ENCODE measurements at regions of chr1 and their contacts with region 1.

Region 1: GRCh38 chr1:4132352-4133308 is 232.6 kb upstream of the C1orf174 start:
- DNase-seq: no peak
- ATAC-seq: no peak
- H3K4me3 ChIP-seq: no peak overlapping the region
- H3K27ac ChIP-seq: no peak overlapping the region
- H3K4me1 ChIP-seq: no peaks in the 10 kb centered on the region
- H3K27me3 ChIP-seq: peaks cover 0 to 4% (median 4%) of the 10 kb centered on the region in 3 donors
- CTCF ChIP-seq: no peak

Region 2: DNA sequence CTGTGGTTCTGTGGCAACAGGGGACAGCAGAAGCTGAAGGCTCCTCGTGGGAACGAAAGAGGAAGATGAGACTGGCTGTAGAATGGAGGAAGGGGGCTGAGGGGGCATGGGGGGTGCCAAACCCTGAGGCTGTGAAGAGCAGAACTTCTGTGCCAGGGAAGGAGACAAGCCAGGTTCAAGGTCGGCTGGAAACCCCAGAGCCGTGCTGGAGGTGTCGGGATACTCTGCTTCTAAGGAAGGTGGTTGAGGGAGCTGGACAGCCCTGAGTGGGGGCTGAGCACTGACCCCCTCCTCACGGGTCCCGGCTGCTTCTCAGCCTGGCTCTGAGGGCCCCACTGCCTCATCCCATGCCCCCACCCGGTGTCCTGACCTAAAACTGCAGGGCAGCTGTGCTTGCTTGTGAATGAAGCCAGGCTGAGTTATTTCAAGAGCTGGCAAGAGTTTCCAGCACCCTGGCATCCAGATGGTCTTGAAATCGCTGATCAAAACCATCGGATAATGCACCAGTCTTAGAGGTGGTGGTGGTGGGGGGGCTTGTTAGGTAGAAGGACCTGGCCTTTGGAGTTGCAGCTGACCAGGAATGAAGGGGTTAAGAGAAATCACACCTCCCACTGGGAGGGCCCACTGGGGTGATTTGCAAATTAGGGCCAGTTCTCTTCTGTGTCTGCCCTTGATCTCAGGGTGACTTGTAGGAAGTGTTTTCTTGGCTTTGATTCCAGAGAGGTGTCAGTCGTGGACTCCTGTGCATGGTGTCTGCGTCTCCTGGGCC is 13.7 kb before region 1 on chr1:
- intact Hi-C with region 1: no loop called
- DNase-seq: no peak
- ATAC-seq: no peak
- H3K4me3 ChIP-seq: no peak overlapping the region
- H3K27ac ChIP-seq: no peak overlapping the region
- H3K4me1 ChIP-seq: no peaks in the 10 kb centered on the region
- H3K27me3 ChIP-seq: peaks cover 0 to 1% (median 0%) of the 10 kb centered on the region in 3 donors
- CTCF ChIP-seq: no peak

Region 3: GRCh38 chr1:4328402-4329071 is 195.9 kb after region 1 on chr1:
- intact Hi-C with region 1: loop called in 1 of 2 experiments (anchors 5 kb)
- DNase-seq: no peak
- ATAC-seq: no peak
- H3K4me3 ChIP-seq: no peak overlapping the region
- H3K27ac ChIP-seq: no peak overlapping the region
- H3K4me1 ChIP-seq: no peaks in the 10 kb centered on the region
- H3K27me3 ChIP-seq: peaks cover 0 to 1% (median 0%) of the 10 kb centered on the region in 3 donors
- CTCF ChIP-seq: no peak

Measured in psoas muscle (tissue), 8 donors.